ENCODE measurements at regions of chr6 and their contacts with region 1.

Region 1: DNA sequence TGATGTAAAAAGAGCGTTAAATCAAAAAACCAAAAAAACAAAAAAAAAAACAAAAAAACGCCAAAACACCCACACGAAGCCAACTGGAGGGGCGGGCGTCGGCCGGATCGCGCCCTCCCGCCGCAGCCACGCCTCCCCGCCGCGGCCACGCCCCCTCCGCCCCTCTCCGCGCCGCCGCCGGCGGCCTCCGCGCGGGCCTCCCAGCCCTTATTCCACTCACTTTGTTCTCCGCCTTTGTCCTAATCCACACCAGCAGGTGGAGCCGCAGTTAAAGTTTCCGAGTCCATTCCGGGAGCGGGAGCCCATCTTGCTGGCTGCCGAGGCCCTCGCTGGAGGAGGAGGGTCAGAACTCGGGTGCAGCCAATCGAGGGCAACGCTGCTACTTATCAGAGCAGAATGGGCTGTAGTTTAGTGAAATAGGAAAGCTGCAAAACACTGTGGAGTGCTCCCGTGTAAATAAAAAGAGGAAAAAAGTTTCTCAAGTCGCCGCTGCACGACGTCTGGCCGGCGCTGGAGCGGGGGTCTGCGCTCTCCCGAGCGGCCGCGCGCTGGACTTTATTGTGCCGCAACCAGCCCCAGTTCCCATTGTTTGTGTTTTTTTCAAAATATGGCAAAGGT is at the start of gene ASF1A:
- DNase-seq: peak; percentile 89 to 99
- H3K4me3 ChIP-seq: peak within 1 kb of the TSS; percentile 82 to 95
- H3K27ac ChIP-seq: peak within 1 kb of the TSS; percentile 93 to 97
- H3K4me1 ChIP-seq: peaks cover 0 to 20% of the 10 kb centered on the region in 2 donors
- H3K27me3 ChIP-seq: no peaks in the 10 kb centered on the region
- CTCF ChIP-seq: peak; percentile 37 to 64 (median 58)
- total RNA-seq, gene ASF1A: 6.8 TPM

Region 2: GRCh38 chr6:117674991-117675657 is 1218.8 kb before region 1 on chr6 and contains the start of gene NUS1:
- intact Hi-C with region 1: loop called (anchors 5 kb)
- DNase-seq: peak; percentile 89 to 99
- H3K4me3 ChIP-seq: peak within 1 kb of the TSS; percentile 81 to 92
- H3K27ac ChIP-seq: peak within 1 kb of the TSS; percentile 79 to 82
- H3K4me1 ChIP-seq: peaks cover 0 to 9% of the 10 kb centered on the region in 2 donors
- H3K27me3 ChIP-seq: no peaks in the 10 kb centered on the region
- CTCF ChIP-seq: peak; percentile 59 to 89 (median 84)
- total RNA-seq, gene NUS1: 14.6 TPM

Region 3: GRCh38 chr6:118542184-118542952 is 351.5 kb before region 1 on chr6:
- intact Hi-C with region 1: loop called (anchors 10 kb)
- DNase-seq: no peak
- H3K4me3 ChIP-seq: no peak overlapping the region
- H3K27ac ChIP-seq: peak overlapping the region; percentile 63 to 89
- H3K4me1 ChIP-seq: peaks cover 3 to 50% of the 10 kb centered on the region in 2 donors
- H3K27me3 ChIP-seq: no peaks in the 10 kb centered on the region
- CTCF ChIP-seq: no peak

Region 4: DNA sequence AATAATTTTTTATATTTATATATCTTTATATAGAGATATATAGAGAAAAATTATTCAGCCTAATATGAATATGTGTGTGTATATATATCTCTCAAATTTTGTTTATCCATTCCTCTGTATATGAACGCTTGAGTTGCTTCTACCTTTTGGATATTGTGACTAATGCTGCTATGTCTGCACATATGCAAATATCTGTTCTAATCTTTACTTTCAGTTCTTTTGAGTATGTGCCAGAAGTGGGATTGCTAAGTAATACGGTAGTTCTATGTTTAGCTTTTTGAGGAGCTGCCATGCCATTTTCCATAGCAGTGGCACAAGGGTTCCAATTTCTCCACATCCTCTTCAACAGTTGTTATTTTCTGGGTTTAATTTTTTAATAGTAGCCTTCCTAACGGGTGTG is 169.7 kb before region 1 on chr6:
- intact Hi-C with region 1: no loop called
- DNase-seq: no peak
- H3K4me3 ChIP-seq: no peak overlapping the region
- H3K27ac ChIP-seq: no peak overlapping the region
- H3K4me1 ChIP-seq: no peaks in the 10 kb centered on the region
- H3K27me3 ChIP-seq: no peaks in the 10 kb centered on the region
- CTCF ChIP-seq: no peak

Region 5: DNA sequence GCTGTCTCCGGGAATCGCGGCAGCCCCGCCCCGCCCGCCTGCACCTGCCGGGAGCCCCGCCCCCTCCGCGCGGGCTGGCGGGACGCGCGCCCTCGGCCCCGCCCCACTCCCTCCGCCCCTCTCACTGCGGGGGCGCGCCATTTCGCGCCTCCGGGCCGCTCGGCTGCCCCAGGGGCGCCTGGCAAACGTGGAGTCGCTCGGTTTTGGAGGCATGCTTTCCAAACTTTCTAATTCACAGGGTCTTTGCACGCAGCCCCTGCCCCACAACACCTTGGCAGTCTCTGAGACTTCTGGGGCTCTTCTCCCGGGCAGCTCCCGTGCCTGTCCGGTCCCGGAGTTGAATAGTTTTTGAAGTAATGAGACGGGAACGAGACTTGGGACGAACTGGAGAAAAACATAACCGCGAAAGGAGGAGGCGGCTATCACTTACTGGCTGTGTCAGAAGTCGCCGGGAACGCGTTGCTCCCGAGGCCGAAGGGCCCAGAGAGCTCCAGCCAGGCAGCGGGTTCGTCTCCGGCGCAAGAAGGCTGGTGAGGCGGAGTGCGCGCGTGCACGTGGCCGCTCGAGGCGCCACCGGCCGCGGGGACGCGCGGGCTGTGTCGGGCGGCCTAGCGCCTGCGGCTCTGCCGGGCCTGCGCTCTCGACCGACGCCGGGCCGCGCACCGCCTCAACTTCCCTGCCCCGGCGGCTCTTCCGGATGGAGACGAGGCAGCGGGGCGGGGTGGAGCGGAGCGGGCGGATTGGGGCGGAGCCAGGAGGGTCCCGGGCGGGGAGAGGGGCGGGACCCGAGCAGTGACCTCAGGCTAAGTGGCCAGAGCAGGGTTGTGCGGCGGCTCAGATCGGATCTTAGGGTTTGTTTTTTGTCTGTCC is 40.8 kb after region 1 on chr6 and contains the start of gene MCM9:
- intact Hi-C with region 1: loop called (anchors 1 kb)
- DNase-seq: peak; percentile 42 to 94
- H3K4me3 ChIP-seq: peak within 1 kb of the TSS; percentile 75 to 97
- H3K27ac ChIP-seq: peak within 1 kb of the TSS; percentile 88 to 95
- H3K4me1 ChIP-seq: peaks cover 0 to 3% of the 10 kb centered on the region in 2 donors
- H3K27me3 ChIP-seq: no peaks in the 10 kb centered on the region
- CTCF ChIP-seq: no peak
- total RNA-seq, gene MCM9: 5.5 TPM

Region 6: GRCh38 chr6:118952683-118953082 is 58.8 kb after region 1 on chr6:
- intact Hi-C with region 1: no loop called
- DNase-seq: no peak
- H3K4me3 ChIP-seq: no peak overlapping the region
- H3K27ac ChIP-seq: no peak overlapping the region
- H3K4me1 ChIP-seq: no peaks in the 10 kb centered on the region
- H3K27me3 ChIP-seq: no peaks in the 10 kb centered on the region
- CTCF ChIP-seq: no peak

Region 7: GRCh38 chr6:118999494-119000040 is 105.7 kb after region 1 on chr6:
- intact Hi-C with region 1: no loop called
- DNase-seq: no peak
- H3K4me3 ChIP-seq: no peak overlapping the region
- H3K27ac ChIP-seq: no peak overlapping the region
- H3K4me1 ChIP-seq: no peaks in the 10 kb centered on the region
- H3K27me3 ChIP-seq: no peaks in the 10 kb centered on the region
- CTCF ChIP-seq: no peak

Region 8: GRCh38 chr6:119110601-119111548 is 217.0 kb after region 1 on chr6:
- intact Hi-C with region 1: loop called (anchors 10 kb)
- DNase-seq: no peak
- H3K4me3 ChIP-seq: no peak overlapping the region
- H3K27ac ChIP-seq: no peak overlapping the region
- H3K4me1 ChIP-seq: no peaks in the 10 kb centered on the region
- H3K27me3 ChIP-seq: no peaks in the 10 kb centered on the region
- CTCF ChIP-seq: peak; percentile 47 to 70 (median 48)